GM12878 (cell line): ENCODE measurements at regions of chr7 and their contacts with region 1.

Region 1: DNA sequence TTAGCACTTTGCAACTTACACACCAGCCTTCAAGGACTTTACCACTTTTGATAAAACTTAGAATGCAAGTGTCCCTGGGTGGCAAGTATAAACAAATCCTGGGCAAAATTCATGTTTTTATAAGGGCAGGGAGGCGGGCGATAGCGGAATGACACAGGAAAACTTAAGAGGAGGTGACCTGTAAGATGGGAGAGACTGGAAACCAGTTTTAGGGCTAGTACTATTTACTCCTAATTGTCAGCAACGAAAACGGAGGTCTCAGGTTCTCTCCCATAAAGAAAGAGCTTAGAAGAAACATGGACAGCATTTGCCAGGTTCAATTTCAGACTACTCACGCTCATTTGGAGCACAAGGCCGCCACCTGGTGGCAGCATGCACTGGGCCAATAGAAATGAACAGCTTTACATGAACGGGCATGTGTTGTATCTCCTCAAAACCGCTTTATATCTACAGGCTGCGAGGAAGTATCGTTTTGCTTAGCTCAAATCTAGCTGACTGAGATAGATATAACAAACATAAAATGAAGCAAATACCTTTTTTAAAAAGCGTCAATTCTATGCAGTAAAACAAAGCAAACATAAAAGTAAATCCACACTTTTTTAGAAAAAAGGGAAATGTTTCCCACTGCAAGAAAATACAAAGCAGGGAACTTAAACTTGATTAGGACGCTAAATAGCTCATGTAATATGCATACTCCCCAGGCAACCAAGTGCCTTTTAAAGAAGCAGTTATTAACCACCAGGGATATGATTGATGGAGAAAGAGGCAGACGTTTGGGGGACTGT is 37.6 kb upstream of the SVOPL start:
- DNase-seq: peak; percentile 64
- ATAC-seq: peak; percentile 99
- H3K4me3 ChIP-seq: no peak overlapping the region
- H3K27ac ChIP-seq: no peak overlapping the region
- H3K4me1 ChIP-seq: no peaks in the 10 kb centered on the region
- H3K27me3 ChIP-seq: no peaks in the 10 kb centered on the region
- CTCF ChIP-seq: peak; percentile 87 to 98 (median 94); a peak in 5 of 6 replicates
- EP300 ChIP-seq: no peak
- POLR2A ChIP-seq: no peak
- RAD21 ChIP-seq: peak; percentile 98

Region 2: DNA sequence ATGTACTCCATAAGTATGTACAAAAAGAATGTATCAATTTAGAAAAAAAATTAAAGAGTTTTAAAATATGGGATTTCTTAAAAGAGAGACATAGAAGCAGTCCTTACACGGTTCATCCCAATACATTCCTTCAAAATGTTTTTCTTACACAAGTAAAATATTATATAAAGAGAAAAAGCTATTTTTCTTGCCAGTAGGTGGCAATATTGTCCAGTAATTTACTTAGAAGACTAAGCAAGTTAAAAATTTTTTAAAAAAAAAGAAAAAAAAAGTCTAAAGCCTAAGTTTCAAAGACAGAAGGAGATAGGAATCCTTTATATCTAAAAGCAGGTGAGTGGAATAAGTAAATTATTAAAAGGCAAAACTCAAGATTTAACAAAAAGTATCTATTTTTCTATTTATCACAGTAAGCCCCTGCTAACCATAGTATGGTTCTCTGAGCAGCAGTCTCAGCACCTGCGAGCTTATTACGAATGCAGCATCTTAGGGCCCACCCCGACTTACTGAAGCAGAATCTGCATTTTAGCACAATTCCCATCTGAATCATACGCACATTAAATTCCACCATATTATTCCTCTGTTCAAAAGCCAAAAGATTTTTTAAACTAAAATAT is 1132.6 kb before region 1 on chr7:
- CTCF ChIA-PET with region 1: no interaction called
- POLR2A ChIA-PET with region 1: no interaction called
- RAD21 ChIA-PET with region 1: interaction called, 3 read pairs
- SMC1A ChIA-PET with region 1: no interaction called
- in situ Hi-C with region 1: loop called (anchors 25 kb)
- intact Hi-C with region 1: loop called (anchors 2 kb)
- DNase-seq: no peak
- ATAC-seq: peak; percentile 51; the same call in 1 of the 3 replicates
- H3K4me3 ChIP-seq: no peak overlapping the region
- H3K27ac ChIP-seq: no peak overlapping the region
- H3K4me1 ChIP-seq: no peaks in the 10 kb centered on the region
- H3K27me3 ChIP-seq: no peaks in the 10 kb centered on the region
- CTCF ChIP-seq: peak in 1 of 3 experiments; percentile 29; a peak in 2 of 6 replicates
- EP300 ChIP-seq: no peak
- POLR2A ChIP-seq: no peak
- RAD21 ChIP-seq: no peak

Region 3: GRCh38 chr7:138097064-138097741 is 641.5 kb before region 1 on chr7:
- CTCF ChIA-PET with region 1: interaction called, 8 read pairs
- POLR2A ChIA-PET with region 1: no interaction called
- RAD21 ChIA-PET with region 1: interaction called, 7 read pairs
- SMC1A ChIA-PET with region 1: interaction called, 6 read pairs
- in situ Hi-C with region 1: no loop called
- intact Hi-C with region 1: loop called (anchors 1 kb)
- DNase-seq: no peak
- ATAC-seq: peak; percentile 86
- H3K4me3 ChIP-seq: no peak overlapping the region
- H3K27ac ChIP-seq: no peak overlapping the region
- H3K4me1 ChIP-seq: no peaks in the 10 kb centered on the region
- H3K27me3 ChIP-seq: no peaks in the 10 kb centered on the region
- CTCF ChIP-seq: peak; percentile 43 to 57 (median 54)
- EP300 ChIP-seq: no peak
- POLR2A ChIP-seq: no peak
- RAD21 ChIP-seq: peak; percentile 51

Region 4: GRCh38 chr7:138170959-138171703 is 567.6 kb before region 1 on chr7:
- CTCF ChIA-PET with region 1: interaction called, 14 read pairs
- POLR2A ChIA-PET with region 1: no interaction called
- RAD21 ChIA-PET with region 1: interaction called, 6 read pairs
- SMC1A ChIA-PET with region 1: interaction called, 15 read pairs
- in situ Hi-C with region 1: no loop called
- intact Hi-C with region 1: no loop called
- DNase-seq: peak; percentile 55
- ATAC-seq: peak; percentile 95
- H3K4me3 ChIP-seq: peak overlapping the region; percentile 4; the same call in 1 of the 2 replicates
- H3K27ac ChIP-seq: no peak overlapping the region
- H3K4me1 ChIP-seq: peaks cover 15% of the 10 kb centered on the region
- H3K27me3 ChIP-seq: no peaks in the 10 kb centered on the region
- CTCF ChIP-seq: no peak
- EP300 ChIP-seq: no peak
- POLR2A ChIP-seq: no peak
- RAD21 ChIP-seq: no peak

Region 5: DNA sequence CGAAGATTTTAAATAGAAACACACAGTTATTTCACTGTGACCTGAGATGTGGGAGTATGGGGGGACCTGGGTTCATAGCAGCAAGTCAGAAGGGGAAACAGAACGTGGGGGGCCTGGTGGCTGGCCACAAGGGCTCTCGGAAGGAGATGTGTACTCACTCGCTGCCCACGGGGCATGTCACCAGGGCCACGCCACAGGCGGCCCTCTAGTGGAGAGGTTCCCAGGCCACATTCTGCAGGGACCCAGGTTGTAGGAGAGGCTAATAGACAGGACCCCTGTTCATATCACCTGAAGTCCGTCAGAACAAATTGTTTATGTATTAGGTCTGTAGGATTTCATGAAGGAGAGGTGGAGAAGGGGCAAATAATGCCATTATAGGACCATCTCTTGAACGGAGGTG is 12.5 kb before region 1 on chr7:
- CTCF ChIA-PET with region 1: interaction called, 10 read pairs
- POLR2A ChIA-PET with region 1: no interaction called
- RAD21 ChIA-PET with region 1: interaction called, 4 read pairs
- SMC1A ChIA-PET with region 1: interaction called, 4 read pairs
- in situ Hi-C with region 1: no loop called
- intact Hi-C with region 1: no loop called
- DNase-seq: no peak
- ATAC-seq: peak; percentile 46; the same call in 1 of the 3 replicates
- H3K4me3 ChIP-seq: no peak overlapping the region
- H3K27ac ChIP-seq: no peak overlapping the region
- H3K4me1 ChIP-seq: no peaks in the 10 kb centered on the region
- H3K27me3 ChIP-seq: no peaks in the 10 kb centered on the region; a peak in 1 of 4 replicates
- CTCF ChIP-seq: peak; percentile 2 to 21 (median 12); a peak in 1 of 6 replicates
- EP300 ChIP-seq: no peak
- POLR2A ChIP-seq: no peak
- RAD21 ChIP-seq: no peak